ENCODE measurements at regions of chr6 and their contacts with region 1.

Region 1: DNA sequence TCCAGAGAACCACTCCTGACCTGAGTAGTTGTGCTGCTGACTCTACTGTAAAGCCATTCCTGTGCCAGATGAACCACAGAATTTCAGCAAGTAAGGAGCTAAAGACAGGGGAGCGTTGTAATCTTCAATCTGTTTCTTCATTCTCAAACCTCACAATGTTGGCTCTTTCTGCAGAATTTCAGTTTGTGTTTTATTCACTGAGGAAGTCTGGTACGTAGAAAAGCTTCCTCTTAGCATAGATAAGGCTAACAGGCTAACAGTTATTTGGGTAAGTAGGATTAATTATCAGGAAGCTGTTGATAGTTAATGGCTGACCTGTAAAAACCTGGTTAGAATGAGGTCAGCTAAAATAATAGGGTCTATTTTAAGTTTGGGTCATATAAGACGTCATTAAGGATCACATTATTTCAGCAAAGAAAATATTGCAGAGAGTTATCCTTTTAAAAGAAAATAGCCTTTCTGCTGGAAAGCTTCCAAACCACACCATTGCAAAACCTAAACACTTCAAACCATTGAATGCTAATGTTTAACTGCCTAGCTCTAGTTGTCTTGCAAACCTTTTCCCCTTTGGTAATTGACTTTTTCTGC is 14.1 kb upstream of the TENT5A start:
- DNase-seq: peak; percentile 11 to 73
- H3K4me3 ChIP-seq: peak overlapping the region; percentile 23; the same call in 1 of the 2 replicates
- H3K27ac ChIP-seq: peak overlapping the region; percentile 70
- H3K4me1 ChIP-seq: peaks cover 46% of the 10 kb centered on the region
- H3K27me3 ChIP-seq: no peaks in the 10 kb centered on the region
- CTCF ChIP-seq: no peak

Region 2: GRCh38 chr6:80872199-80872950 is 894.2 kb before region 1 on chr6:
- CTCF ChIA-PET with region 1: no interaction called
- POLR2A ChIA-PET with region 1: no interaction called
- intact Hi-C with region 1: no loop called
- DNase-seq: no peak
- H3K4me3 ChIP-seq: no peak overlapping the region
- H3K27ac ChIP-seq: no peak overlapping the region
- H3K4me1 ChIP-seq: no peaks in the 10 kb centered on the region
- H3K27me3 ChIP-seq: no peaks in the 10 kb centered on the region
- CTCF ChIP-seq: no peak

Region 3: GRCh38 chr6:81216651-81217050 is 549.9 kb before region 1 on chr6:
- CTCF ChIA-PET with region 1: no interaction called
- POLR2A ChIA-PET with region 1: no interaction called
- intact Hi-C with region 1: no loop called
- DNase-seq: no peak
- H3K4me3 ChIP-seq: no peak overlapping the region
- H3K27ac ChIP-seq: no peak overlapping the region
- H3K4me1 ChIP-seq: no peaks in the 10 kb centered on the region
- H3K27me3 ChIP-seq: no peaks in the 10 kb centered on the region
- CTCF ChIP-seq: no peak

Region 4: GRCh38 chr6:81683928-81684327 is 82.6 kb before region 1 on chr6:
- CTCF ChIA-PET with region 1: no interaction called
- POLR2A ChIA-PET with region 1: no interaction called
- intact Hi-C with region 1: no loop called
- DNase-seq: no peak
- H3K4me3 ChIP-seq: no peak overlapping the region
- H3K27ac ChIP-seq: no peak overlapping the region
- H3K4me1 ChIP-seq: peaks cover 8% of the 10 kb centered on the region
- H3K27me3 ChIP-seq: no peaks in the 10 kb centered on the region
- CTCF ChIP-seq: no peak

Region 5: GRCh38 chr6:81938014-81938856 is 171.7 kb after region 1 on chr6:
- CTCF ChIA-PET with region 1: no interaction called
- POLR2A ChIA-PET with region 1: no interaction called
- intact Hi-C with region 1: loop called (anchors 2 kb)
- DNase-seq: peak; percentile 15 to 91
- H3K4me3 ChIP-seq: no peak overlapping the region
- H3K27ac ChIP-seq: peak overlapping the region; percentile 96
- H3K4me1 ChIP-seq: peaks cover 46% of the 10 kb centered on the region
- H3K27me3 ChIP-seq: no peaks in the 10 kb centered on the region
- CTCF ChIP-seq: no peak

Measured in PC-9 (cell line).